Left lung (tissue), 14 donors: ENCODE measurements at regions of chr2 and their contacts with region 1.

Region 1: GRCh38 chr2:84865181-84865783 is 15.6 kb downstream of the TRABD2A start:
- DNase-seq: no peak
- ATAC-seq: peak; percentile 70
- H3K4me3 ChIP-seq: no peak overlapping the region
- H3K27ac ChIP-seq: no peak overlapping the region
- H3K4me1 ChIP-seq: no peaks in the 10 kb centered on the region
- H3K27me3 ChIP-seq: no peaks in the 10 kb centered on the region
- CTCF ChIP-seq: peak in 1 of 2 donors; percentile 29

Region 2: DNA sequence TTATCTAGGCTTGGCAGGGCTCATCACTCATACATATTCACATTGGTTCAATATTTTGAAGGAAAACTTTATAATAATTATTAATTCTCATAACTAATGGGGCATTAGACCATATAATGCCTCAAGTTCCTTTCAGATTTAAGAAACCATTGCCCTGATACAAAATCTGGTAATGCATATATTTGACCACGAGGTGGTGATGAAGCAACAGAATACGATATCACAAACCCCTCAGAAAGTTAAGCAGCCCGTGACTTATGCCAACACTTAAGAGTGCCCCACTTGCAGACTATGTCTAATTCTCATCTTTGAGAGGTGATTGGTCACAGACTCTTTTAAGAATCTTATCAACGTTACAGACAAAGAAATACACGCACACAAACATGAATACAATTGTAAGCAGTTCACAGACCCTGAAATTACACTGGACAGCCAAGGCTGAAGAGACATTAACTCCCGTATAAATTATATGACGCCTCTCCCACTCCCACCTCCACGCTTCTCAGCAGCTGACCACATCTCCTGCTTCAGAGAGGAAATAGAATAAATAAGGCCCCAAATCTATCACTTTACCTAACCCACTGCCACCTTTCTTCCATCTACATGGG is 369.6 kb before region 1 on chr2:
- intact Hi-C with region 1: loop called in 1 of 2 experiments (anchors 5 kb)
- DNase-seq: peak in 1 of 4 donors; percentile 78
- ATAC-seq: peak; percentile 95
- H3K4me3 ChIP-seq: no peak overlapping the region
- H3K27ac ChIP-seq: no peak overlapping the region
- H3K4me1 ChIP-seq: no peaks in the 10 kb centered on the region
- H3K27me3 ChIP-seq: no peaks in the 10 kb centered on the region
- CTCF ChIP-seq: peak; percentile 69 to 74